Activated T-helper 2 cell treated with anti-CD3 and anti-CD28 coated beads, Interferon-gamma antibody, Interleukin-2, Interleukin-4, amounts not matched to agents 10 μg/mL and 5 μg/mL and 100 μg/mL, durations not matched to agents 14 hours and 24 hours and 36 hours (primary cell): ENCODE measurements at regions of chr4 and their contacts with region 1.

Region 1: DNA sequence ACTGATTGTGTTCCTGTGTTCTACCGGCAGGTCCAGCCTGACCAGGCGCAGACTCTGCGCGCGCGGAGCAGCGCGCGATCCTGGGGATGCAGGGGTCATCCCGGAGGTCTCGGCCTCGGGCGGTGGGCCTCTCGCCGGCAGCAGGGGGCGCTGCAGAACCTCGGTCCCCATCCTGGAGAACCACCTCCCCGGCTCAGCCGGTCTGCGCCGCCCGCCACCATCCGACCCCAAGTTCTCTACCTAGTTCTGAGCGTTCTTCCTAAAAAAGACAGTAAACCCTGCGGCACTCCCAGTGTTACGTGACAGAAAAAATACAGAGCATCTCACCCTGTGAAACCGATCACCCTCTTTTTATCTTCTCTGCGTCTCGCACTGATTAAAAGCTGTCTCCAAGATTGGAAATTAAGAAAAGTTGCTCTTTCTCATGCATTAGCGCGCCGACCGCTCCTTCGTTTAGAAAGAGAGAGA is 1.6 kb downstream of the TRPC3 start:
- DNase-seq: peak; percentile 71
- H3K4me3 Mint-ChIP-seq: peak overlapping the region; percentile 82
- H3K27ac Mint-ChIP-seq: no peak overlapping the region
- H3K4me1 Mint-ChIP-seq: peaks cover 14% of the 10 kb centered on the region
- H3K27me3 Mint-ChIP-seq: peaks cover 63% of the 10 kb centered on the region

Region 2: DNA sequence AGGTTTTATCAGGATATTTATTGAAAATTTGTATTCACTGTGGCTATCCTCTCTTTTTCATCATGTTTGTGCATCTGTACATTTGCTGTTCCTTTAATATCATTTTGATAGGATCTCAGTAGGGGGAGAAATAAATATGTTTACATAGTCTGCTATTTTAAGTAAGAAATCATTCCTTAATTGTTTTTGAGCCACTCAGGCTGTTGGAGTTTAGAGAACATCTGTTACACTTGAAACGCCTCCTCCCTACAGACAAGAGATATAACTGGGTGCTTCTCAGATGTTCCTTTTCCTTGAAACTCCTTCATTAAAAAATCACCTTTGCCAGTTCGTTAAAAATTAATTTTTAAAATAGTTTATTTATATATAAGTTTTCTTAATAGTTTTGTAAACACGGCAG is 628.8 kb before region 1 on chr4:
- intact Hi-C with region 1: no loop called
- DNase-seq: no peak
- H3K4me3 Mint-ChIP-seq: no peak overlapping the region
- H3K27ac Mint-ChIP-seq: no peak overlapping the region
- H3K4me1 Mint-ChIP-seq: no peaks in the 10 kb centered on the region
- H3K27me3 Mint-ChIP-seq: peaks cover 32% of the 10 kb centered on the region

Region 3: DNA sequence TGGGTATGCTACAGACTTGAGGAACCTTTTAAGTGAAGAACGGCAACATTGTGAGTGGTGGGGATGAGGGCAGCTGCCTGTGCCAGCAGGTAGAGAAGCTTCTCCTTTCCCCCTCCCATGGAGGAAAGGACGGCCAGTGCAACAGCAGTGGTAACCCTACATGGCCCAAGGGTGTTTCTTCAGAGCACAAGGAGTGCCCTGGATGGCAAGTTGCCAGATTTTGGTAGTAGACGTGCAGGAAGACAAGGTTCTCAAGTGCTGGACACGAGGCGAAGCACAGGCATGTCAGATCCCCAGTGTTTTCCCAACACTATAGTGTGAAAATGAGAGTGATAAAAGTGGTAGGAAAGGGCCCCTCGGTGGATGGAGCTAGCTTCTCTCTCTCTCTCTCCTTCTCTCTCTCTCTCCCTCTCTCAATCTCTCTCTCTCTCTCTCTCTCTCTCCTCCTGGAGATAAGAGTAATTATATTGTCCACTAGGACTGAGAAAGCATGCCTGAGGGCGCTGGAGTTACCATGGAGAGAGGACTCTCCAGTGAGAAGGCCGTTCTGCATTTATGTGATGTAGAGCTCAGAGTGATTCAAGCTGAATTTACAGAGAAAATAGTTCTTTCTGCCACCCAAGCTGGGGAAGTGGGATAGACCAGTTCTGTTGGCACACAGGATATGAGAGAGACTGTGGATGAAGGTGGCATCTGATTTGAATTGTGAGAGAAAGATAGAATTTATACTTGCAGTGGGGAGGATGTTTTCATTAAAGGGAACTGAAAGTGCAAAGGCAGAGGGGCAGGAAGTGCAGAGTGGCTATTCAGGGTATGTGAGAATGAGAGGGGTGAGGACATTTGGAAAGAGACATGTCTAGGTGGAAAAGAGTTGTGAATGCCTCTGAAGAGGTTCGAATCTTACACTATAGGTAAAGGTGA is 27.3 kb after region 1 on chr4:
- intact Hi-C with region 1: no loop called
- DNase-seq: no peak
- H3K4me3 Mint-ChIP-seq: no peak overlapping the region
- H3K27ac Mint-ChIP-seq: no peak overlapping the region
- H3K4me1 Mint-ChIP-seq: peaks cover 5% of the 10 kb centered on the region
- H3K27me3 Mint-ChIP-seq: peaks cover 29% of the 10 kb centered on the region

Region 4: GRCh38 chr4:122003335-122003734 is 53.1 kb after region 1 on chr4:
- intact Hi-C with region 1: loop called (anchors 1 kb)
- DNase-seq: no peak
- H3K4me3 Mint-ChIP-seq: no peak overlapping the region
- H3K27ac Mint-ChIP-seq: no peak overlapping the region
- H3K4me1 Mint-ChIP-seq: peaks cover 4% of the 10 kb centered on the region
- H3K27me3 Mint-ChIP-seq: peaks cover 22% of the 10 kb centered on the region

Region 5: GRCh38 chr4:122309988-122310626 is 359.9 kb after region 1 on chr4:
- intact Hi-C with region 1: loop called (anchors 5 kb)
- DNase-seq: no peak
- H3K4me3 Mint-ChIP-seq: no peak overlapping the region
- H3K27ac Mint-ChIP-seq: no peak overlapping the region
- H3K4me1 Mint-ChIP-seq: peaks cover 7% of the 10 kb centered on the region
- H3K27me3 Mint-ChIP-seq: no peaks in the 10 kb centered on the region